ENCODE measurements at regions of chr14 and their contacts with region 1.

Region 1: DNA sequence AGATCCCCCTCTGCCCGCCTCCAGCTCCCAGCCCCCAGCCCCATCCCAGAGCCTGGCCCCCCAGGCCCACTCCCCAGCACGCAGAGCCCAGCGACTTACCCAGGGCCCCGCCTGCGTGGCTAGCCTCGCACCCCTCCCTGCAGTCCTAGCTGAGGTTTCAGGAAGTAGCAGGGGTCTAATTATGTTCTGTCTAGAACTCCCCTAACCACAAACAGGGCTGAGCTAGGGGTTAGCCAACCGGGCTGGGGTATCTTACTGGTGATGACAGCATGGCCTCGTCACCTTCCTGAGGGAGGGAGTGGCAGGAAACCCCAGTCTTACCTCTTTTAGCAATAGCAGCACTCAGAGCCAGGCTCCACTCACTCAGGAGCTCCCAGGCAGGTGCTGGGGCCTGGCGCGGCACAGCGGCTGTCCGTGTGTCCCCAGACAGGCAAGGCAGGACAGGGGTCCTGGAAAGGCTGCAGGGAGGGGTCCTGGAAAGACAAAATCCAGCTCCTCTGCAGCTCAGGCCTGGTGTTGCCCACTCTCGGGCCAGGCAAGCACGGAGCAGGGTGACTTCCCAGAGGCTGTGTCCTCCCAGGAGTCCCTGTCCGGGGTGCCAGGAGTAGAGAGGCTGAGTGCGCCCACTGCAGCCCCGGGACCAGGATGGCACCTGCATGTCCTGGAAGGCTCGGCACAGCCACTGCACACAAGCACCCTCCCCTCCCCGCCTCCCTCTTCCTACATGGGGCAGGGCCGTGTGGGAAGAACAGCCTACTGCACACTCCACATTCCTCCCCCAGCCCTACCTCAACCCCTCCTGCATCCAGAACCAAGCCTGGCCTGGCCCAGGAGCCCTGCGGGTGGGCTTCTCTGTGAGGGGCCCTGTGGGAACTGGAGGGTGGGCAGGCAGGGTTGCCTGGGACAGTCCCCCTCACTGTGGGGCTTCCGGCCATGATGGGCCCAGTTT is at the start of gene GPR132:
- DNase-seq: peak; percentile 97
- H3K4me3 Mint-ChIP-seq: peak within 1 kb of the TSS; percentile 84
- H3K27ac Mint-ChIP-seq: peak within 1 kb of the TSS; percentile 96
- H3K4me1 Mint-ChIP-seq: peaks cover 81% of the 10 kb centered on the region
- H3K27me3 Mint-ChIP-seq: no peaks in the 10 kb centered on the region
- total RNA-seq, gene GPR132: 11.3 to 15.3 TPM

Region 2: GRCh38 chr14:105480952-105481801 is 415.6 kb after region 1 on chr14:
- CTCF ChIA-PET with region 1: no interaction called
- intact Hi-C with region 1: loop called (anchors 2 kb)
- DNase-seq: peak; percentile 93
- H3K4me3 Mint-ChIP-seq: peak overlapping the region; percentile 71
- H3K27ac Mint-ChIP-seq: peak overlapping the region; percentile 86
- H3K4me1 Mint-ChIP-seq: peaks cover 60% of the 10 kb centered on the region
- H3K27me3 Mint-ChIP-seq: peaks cover 20% of the 10 kb centered on the region

Measured in activated naive CD4-positive, alpha-beta T cell treated with anti-CD3 and anti-CD28 coated beads for 36 hours (primary cell).